HCT116 (cell line): ENCODE measurements at regions of chr16 and their contacts with region 1.

Region 1: GRCh38 chr16:11871193-11871592 is 19.9 kb upstream of the RSL1D1 start:
- DNase-seq: no peak
- ATAC-seq: 0 out of 2 replicates have a peak, but pooled peaks have one; percentile 19
- H3K4me3 ChIP-seq: no peak overlapping the region
- H3K27ac ChIP-seq: no peak overlapping the region; the same call in 1 of the 2 replicates
- H3K4me1 ChIP-seq: peaks cover 16 to 31% of the 10 kb centered on the region in 2 experiments
- H3K27me3 ChIP-seq: no peaks in the 10 kb centered on the region
- CTCF ChIP-seq: peak in 2 of 3 experiments; percentile 6 to 27; a peak in 1 of 6 replicates
- POLR2A ChIP-seq: no peak
- RAD21 ChIP-seq: peak; percentile 30

Region 2: DNA sequence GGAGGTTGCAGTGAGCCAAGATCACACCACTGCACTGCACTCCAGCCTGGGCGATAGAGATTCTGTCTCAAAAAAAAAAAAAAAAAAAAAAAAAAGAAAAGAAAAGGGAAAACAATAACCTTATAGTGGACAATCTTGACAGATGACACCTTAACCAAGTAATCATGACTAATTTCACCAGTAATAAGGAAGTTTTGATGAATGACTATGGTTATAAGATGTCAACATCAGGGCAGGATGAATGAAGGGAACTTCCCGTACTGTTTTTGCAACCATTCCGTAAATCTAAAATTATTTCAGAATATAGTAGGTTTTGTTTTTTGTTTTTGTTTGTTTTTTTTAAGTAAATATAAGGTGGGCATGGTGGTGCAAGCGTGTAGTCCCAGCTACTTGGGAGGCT is 21.6 kb after region 1 on chr16:
- CTCF ChIA-PET with region 1: no interaction called
- POLR2A ChIA-PET with region 1: no interaction called
- RAD21 ChIA-PET with region 1: no interaction called
- intact Hi-C with region 1: loop called (anchors 1 kb)
- DNase-seq: no peak
- ATAC-seq: no peak
- H3K4me3 ChIP-seq: no peak overlapping the region
- H3K27ac ChIP-seq: no peak overlapping the region
- H3K4me1 ChIP-seq: no peaks in the 10 kb centered on the region
- H3K27me3 ChIP-seq: no peaks in the 10 kb centered on the region
- CTCF ChIP-seq: no peak
- POLR2A ChIP-seq: no peak
- RAD21 ChIP-seq: no peak